Caco-2 (cell line): ENCODE measurements at regions of chr5 and their contacts with region 1.

Region 1: DNA sequence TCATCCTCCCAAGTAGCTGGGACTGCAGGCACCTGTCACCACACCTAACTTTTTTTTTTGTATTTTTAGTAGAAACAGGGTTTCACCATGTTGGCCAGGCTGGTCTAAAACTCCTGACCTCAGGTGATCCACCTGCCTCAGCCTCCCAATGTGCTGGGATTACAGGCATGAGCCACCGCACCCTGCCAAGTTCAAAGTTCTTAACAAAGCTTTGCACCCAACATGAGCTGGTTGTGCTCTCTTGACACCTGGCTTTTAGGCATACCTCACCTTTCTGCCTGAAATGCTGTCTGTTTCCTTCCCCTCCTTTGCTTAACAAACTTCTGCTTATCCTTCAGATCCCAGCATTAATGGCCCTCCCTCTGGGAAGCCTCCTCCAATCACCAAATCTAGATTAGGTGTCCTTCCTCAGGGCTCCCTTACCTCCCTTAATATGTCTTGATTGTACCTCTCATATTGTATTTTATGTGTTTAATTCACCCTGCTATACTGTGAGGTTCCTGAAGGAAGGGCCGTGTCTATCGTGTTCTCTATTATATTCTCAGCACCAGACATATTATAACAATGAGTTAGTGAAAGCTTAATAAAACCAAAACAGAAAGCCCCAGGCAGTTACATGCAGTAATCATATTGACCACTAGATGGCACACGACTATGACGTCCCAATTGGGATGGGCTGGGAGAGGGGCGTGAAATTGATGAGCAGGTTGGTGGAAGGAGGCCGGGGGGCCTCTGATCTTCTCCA is 62.9 kb upstream of the PPARGC1B start:
- DNase-seq: peak in 1 of 2 experiments; percentile 53
- H3K4me3 ChIP-seq: no peak overlapping the region
- H3K4me3 Mint-ChIP-seq: no peak overlapping the region
- H3K27ac Mint-ChIP-seq: no peak overlapping the region
- H3K4me1 ChIP-seq: no peaks in the 10 kb centered on the region
- H3K4me1 Mint-ChIP-seq: no peaks in the 10 kb centered on the region
- H3K27me3 ChIP-seq: no peaks in the 10 kb centered on the region
- H3K27me3 Mint-ChIP-seq: no peaks in the 10 kb centered on the region
- CTCF ChIP-seq: peak; percentile 78 to 89

Region 2: GRCh38 chr5:149636851-149637246 is 30.4 kb before region 1 on chr5:
- CTCF ChIA-PET with region 1: no interaction called
- POLR2A ChIA-PET with region 1: no interaction called
- intact Hi-C with region 1: loop called (anchors 2 kb)
- DNase-seq: peak; percentile 89 to 91
- H3K4me3 ChIP-seq: no peak overlapping the region
- H3K4me3 Mint-ChIP-seq: no peak overlapping the region
- H3K27ac Mint-ChIP-seq: no peak overlapping the region
- H3K4me1 ChIP-seq: peaks cover 10% of the 10 kb centered on the region; the same call in 1 of the 2 replicates
- H3K4me1 Mint-ChIP-seq: no peaks in the 10 kb centered on the region
- H3K27me3 ChIP-seq: no peaks in the 10 kb centered on the region
- H3K27me3 Mint-ChIP-seq: no peaks in the 10 kb centered on the region
- CTCF ChIP-seq: peak; percentile 90 to 95